Vagina (tissue), 2 donors: ENCODE measurements at regions of chr19 and their contacts with region 1.

Region 1: DNA sequence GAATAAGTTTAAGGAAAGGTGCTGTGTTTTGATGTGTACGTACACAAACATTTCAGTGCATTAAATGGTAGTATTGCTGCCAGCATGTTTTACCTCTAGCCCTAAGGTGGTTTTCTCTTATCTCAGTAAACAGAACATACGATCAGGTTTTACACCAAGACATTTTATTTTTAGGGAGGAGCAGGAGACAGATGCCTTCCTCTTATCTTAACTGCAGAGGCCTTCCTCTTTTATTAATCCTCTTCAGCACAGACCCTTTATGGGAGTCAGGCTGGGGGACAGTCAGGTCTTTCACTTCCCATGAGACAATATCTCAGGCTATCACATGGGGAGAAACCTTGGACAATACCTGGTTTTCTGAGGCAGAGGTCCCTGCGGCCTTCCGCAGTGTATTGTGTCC is 14.9 kb upstream of the ZNF611 start:
- DNase-seq: no peak
- H3K4me3 ChIP-seq: no peak overlapping the region
- H3K27ac ChIP-seq: no peak overlapping the region
- H3K4me1 ChIP-seq: no peaks in the 10 kb centered on the region
- H3K27me3 ChIP-seq: no peaks in the 10 kb centered on the region
- CTCF ChIP-seq: no peak
- POLR2A ChIP-seq: no peak

Region 2: GRCh38 chr19:52734331-52734892 is 15.4 kb before region 1 on chr19:
- intact Hi-C with region 1: loop called (anchors 2 kb)
- DNase-seq: no peak
- H3K4me3 ChIP-seq: peak overlapping the region; percentile 59 to 82
- H3K27ac ChIP-seq: peak overlapping the region; percentile 82
- H3K4me1 ChIP-seq: peaks cover 23% of the 10 kb centered on the region
- H3K27me3 ChIP-seq: no peaks in the 10 kb centered on the region
- CTCF ChIP-seq: no peak
- POLR2A ChIP-seq: no peak

Region 3: DNA sequence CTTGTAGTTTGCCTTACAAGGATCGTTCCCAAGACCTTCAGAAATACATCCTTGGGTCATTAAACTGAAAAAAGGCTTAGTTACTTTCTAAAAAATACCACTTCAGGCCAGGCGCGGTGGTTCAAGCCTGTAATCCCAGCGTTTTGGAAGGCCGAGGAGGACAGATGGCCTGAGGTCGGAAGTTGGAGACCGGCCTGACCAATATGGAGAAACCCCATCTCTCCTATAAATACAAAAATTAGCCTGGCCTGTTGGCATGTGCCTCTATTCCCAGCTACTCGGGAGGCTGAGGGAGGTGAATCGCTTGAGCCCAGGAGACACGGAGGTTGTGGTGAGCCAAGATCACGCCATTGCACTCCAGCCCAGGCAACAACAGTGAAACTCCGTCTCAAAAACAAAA is 73.9 kb after region 1 on chr19:
- intact Hi-C with region 1: no loop called
- DNase-seq: no peak
- H3K4me3 ChIP-seq: no peak overlapping the region
- H3K27ac ChIP-seq: no peak overlapping the region
- H3K4me1 ChIP-seq: peaks cover 7% of the 10 kb centered on the region
- H3K27me3 ChIP-seq: no peaks in the 10 kb centered on the region
- CTCF ChIP-seq: no peak
- POLR2A ChIP-seq: no peak